Heart left ventricle (tissue), 16 donors: ENCODE measurements at regions of chr2 and their contacts with region 1.

Region 1: GRCh38 chr2:65366595-65367125 is 65.7 kb downstream of the SPRED2 start:
- DNase-seq: peak in 1 of 5 donors; percentile 25
- ATAC-seq: peak in 3 of 4 donors; percentile 65 to 80 (median 76)
- H3K4me3 ChIP-seq: peak overlapping the region in 3 of 12 donors; percentile 15 to 23 (median 19)
- H3K27ac ChIP-seq: peak overlapping the region in 10 of 12 donors; percentile 0 to 73 (median 38)
- H3K4me1 ChIP-seq: peaks cover 3 to 76% (median 50%) of the 10 kb centered on the region in 12 donors
- H3K27me3 ChIP-seq: no peaks in the 10 kb centered on the region
- CTCF ChIP-seq: no peak
- POLR2A ChIP-seq: no peak

Region 2: DNA sequence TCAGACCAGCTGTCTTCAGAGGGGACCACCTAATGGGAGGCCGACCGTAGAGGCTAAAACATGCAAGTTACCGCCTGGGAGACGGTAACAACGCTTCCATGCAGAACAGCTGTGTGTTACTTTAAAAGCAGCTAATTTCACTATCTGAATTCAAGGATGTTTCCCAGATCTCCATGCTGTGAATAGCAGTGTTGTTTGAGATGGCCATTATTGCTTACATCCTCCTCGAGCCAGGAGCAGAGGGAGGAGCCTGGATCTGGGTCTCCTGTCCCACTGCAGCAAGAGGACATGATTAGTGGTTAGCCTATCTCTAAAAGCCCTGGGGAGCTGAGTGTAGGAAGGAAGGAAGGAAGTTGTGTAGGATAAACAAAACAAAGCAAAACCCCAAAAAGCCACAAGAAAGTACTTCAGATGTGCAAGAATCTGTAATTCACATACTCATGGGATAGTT is 88.1 kb before region 1 on chr2:
- intact Hi-C with region 1: loop called in 1 of 10 experiments (anchors 5 kb)
- DNase-seq: peak in 3 of 5 donors; percentile 26 to 44 (median 42)
- ATAC-seq: peak; percentile 35 to 72 (median 56)
- H3K4me3 ChIP-seq: no peak overlapping the region
- H3K27ac ChIP-seq: peak overlapping the region in 9 of 12 donors; percentile 28 to 59 (median 37)
- H3K4me1 ChIP-seq: peaks cover 7 to 55% (median 29%) of the 10 kb centered on the region in 12 donors
- H3K27me3 ChIP-seq: peaks cover 0 to 4% (median 0%) of the 10 kb centered on the region in 9 donors
- CTCF ChIP-seq: no peak
- POLR2A ChIP-seq: no peak

Region 3: DNA sequence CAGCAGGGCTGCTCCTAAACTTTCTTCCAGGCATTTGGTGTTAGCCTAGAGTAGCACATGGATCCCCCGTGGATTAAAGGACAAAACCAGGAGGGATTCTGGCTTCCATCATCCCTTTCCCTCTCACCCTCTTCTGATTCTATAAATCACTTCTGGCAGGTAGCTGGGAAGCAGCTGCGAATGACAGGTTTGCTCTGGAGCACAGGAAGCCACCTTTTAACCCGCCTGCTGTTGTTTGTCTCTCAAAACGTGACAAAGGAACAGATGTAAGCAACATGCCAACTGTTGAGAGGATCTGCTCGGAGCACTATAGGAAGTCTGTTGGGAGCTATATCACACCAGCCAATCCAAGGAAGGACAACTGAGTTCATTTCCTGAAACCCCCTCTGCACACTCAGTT is 37.1 kb before region 1 on chr2:
- intact Hi-C with region 1: no loop called
- DNase-seq: no peak
- ATAC-seq: no peak
- H3K4me3 ChIP-seq: no peak overlapping the region
- H3K27ac ChIP-seq: no peak overlapping the region
- H3K4me1 ChIP-seq: peaks cover 0 to 3% (median 0%) of the 10 kb centered on the region in 12 donors
- H3K27me3 ChIP-seq: no peaks in the 10 kb centered on the region
- CTCF ChIP-seq: no peak
- POLR2A ChIP-seq: no peak